Right lobe of liver (tissue), 6 donors: ENCODE measurements at regions of chr1 and their contacts with region 1.

Region 1: DNA sequence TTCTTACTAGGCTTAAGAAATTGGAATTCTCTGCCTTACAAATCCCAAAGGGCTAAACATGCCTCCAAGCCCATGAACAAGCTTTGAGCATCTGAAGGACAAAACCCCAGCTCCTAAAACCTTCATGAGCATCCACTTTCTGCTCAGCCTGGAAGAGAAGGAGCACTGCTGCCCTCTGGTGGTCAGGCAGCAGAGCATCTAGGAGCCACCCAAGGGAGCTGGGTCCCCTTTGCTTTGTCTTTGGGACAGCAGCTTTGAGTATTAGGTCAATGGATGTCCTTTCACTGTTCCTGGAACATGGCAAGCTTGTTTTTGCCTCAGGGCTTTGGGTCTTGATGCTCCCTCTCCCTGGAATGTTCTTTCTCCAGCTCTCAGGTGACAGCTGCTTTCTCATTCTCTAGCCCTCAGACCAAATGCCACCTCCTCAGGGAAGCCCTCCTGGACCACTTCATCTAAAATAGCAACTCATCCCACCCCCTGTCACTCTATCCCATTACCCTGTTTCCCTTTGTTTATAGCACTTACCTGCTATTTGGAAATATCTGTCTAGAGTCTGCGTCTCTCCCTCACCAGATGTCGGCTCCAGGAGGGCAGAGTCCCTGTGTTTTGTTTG is 25.7 kb downstream of the RAB7B start:
- DNase-seq: peak; percentile 77 to 84 (median 79)
- ATAC-seq: peak; percentile 87 to 95 (median 92)
- H3K4me3 ChIP-seq: no peak overlapping the region
- H3K27ac ChIP-seq: no peak overlapping the region
- H3K4me1 ChIP-seq: no peaks in the 10 kb centered on the region
- H3K27me3 ChIP-seq: no peaks in the 10 kb centered on the region
- CTCF ChIP-seq: peak; percentile 92 to 97 (median 96)
- POLR2A ChIP-seq: no peak

Region 2: DNA sequence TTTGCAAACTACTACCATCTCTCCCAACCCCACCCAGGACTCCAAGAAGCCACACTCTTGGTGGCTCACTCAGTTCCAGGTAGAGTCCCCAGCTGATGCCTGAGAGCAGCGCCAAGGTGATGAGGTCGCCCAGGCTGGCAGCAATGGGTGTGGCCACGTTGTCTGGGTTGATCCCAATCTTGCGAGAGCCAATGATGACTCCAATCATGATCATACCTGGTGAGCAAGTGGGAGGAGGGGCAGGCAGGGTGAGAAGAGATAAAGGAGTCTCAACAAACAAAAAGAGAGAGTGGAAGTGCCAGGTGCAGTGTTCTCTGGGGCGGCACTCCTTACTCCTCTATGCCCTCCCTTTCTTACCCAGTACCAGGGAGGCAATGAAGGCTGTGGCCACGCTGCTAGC is 178.9 kb before region 1 on chr1:
- intact Hi-C with region 1: loop called (anchors 5 kb)
- DNase-seq: no peak
- ATAC-seq: no peak
- H3K4me3 ChIP-seq: no peak overlapping the region
- H3K27ac ChIP-seq: no peak overlapping the region
- H3K4me1 ChIP-seq: no peaks in the 10 kb centered on the region
- H3K27me3 ChIP-seq: no peaks in the 10 kb centered on the region
- CTCF ChIP-seq: no peak
- POLR2A ChIP-seq: no peak

Region 3: GRCh38 chr1:205827623-205828022 is 149.9 kb before region 1 on chr1:
- intact Hi-C with region 1: no loop called
- DNase-seq: no peak
- ATAC-seq: no peak
- H3K4me3 ChIP-seq: no peak overlapping the region
- H3K27ac ChIP-seq: no peak overlapping the region
- H3K4me1 ChIP-seq: peaks cover 0 to 5% (median 0%) of the 10 kb centered on the region in 4 donors
- H3K27me3 ChIP-seq: no peaks in the 10 kb centered on the region
- CTCF ChIP-seq: no peak
- POLR2A ChIP-seq: no peak

Region 4: DNA sequence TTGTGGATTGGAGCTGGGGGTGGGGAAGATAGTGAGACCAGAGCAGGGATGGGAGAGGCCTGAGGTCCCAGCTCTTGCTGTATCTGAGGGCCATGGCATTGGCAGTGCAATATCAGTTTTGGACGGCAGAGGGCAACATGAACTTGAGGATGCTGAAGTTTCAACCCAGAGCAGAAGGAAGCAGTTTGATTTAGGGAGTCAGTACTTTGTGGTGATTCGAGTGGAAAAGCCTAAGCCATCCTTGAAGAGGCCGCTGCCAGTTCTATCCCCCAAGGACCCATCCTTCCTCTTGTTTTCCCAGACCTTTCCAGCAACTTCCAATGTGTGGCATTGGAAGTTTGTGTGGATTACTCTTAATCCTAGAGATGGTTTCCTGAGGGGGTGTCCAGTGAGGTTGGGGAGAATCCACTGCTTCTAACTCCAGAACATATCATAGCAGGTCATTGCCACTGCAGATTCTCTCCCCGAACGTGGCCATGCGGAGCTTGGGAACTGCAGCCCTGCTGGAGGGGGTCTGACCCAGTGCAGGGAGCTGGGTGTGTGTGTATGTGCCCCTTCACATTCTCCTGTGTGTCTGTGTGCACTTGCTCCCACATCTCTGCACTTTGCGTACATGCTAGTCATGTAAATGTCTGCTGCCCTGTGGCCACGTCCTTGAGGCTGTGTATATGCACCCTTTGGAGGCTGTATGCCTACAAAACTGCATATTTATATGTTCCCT is 58.3 kb before region 1 on chr1:
- intact Hi-C with region 1: loop called in 1 of 2 experiments (anchors 2 kb)
- DNase-seq: peak; percentile 66 to 71 (median 69)
- ATAC-seq: peak; percentile 88 to 97 (median 92)
- H3K4me3 ChIP-seq: no peak overlapping the region
- H3K27ac ChIP-seq: no peak overlapping the region
- H3K4me1 ChIP-seq: no peaks in the 10 kb centered on the region
- H3K27me3 ChIP-seq: no peaks in the 10 kb centered on the region
- CTCF ChIP-seq: peak; percentile 85 to 90 (median 89)
- POLR2A ChIP-seq: no peak

Region 5: GRCh38 chr1:205925730-205926129 is 51.8 kb before region 1 on chr1:
- intact Hi-C with region 1: loop called in 1 of 2 experiments (anchors 5 kb)
- DNase-seq: no peak
- ATAC-seq: no peak
- H3K4me3 ChIP-seq: no peak overlapping the region
- H3K27ac ChIP-seq: no peak overlapping the region
- H3K4me1 ChIP-seq: no peaks in the 10 kb centered on the region
- H3K27me3 ChIP-seq: no peaks in the 10 kb centered on the region
- CTCF ChIP-seq: no peak
- POLR2A ChIP-seq: no peak

Region 6: DNA sequence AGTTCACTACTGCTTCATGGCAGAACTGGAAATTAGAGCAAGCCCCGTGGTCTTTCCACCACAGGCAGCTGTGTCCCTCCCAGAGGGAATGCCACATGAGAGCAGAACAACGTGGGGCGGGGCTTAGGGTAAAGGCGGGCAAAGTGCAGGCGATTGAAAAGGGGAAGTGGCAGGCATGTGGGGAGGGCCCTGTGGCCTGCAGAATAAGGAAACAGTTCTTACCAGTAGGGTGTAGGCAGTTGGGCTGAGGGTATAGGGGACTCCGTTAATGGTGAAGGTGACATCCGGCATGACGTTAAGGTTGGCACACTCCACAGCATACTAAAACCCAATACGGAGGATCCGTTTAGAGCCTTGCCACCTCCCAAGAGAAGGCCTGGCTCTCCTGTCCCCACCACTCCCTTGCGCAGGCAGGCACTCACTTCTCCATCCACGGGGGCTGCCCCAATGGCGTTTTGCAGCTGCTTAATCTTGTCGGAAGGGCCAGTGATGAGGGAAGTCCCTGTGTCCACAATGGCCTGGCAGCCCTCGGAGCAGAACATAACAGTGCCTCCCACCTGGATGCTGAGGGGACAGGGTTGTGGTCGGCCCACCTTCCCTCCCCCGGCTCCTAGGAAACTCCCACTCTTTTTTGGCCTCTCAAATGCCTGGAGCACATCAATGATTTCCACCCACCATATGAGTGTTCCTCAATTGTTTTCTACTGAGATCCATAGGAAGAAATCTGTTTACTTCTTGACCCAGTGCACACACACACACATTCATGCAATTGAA is 34.8 kb after region 1 on chr1:
- intact Hi-C with region 1: no loop called
- DNase-seq: peak; percentile 59 to 74 (median 68)
- ATAC-seq: peak; percentile 64 to 91 (median 82)
- H3K4me3 ChIP-seq: no peak overlapping the region
- H3K27ac ChIP-seq: no peak overlapping the region
- H3K4me1 ChIP-seq: no peaks in the 10 kb centered on the region
- H3K27me3 ChIP-seq: no peaks in the 10 kb centered on the region
- CTCF ChIP-seq: no peak
- POLR2A ChIP-seq: no peak